Endothelial cell of umbilical vein (primary cell): ENCODE measurements at regions of chr15 and their contacts with region 1.

Region 1: GRCh38 chr15:48358229-48358641 is 27.0 kb downstream of the DUT start:
- DNase-seq: peak; percentile 82
- H3K4me3 ChIP-seq: peak overlapping the region in 1 of 3 experiments; percentile 4
- H3K27ac ChIP-seq: peak overlapping the region; percentile 28
- H3K4me1 ChIP-seq: peaks cover 22% of the 10 kb centered on the region
- H3K27me3 ChIP-seq: no peaks in the 10 kb centered on the region
- CTCF ChIP-seq: peak; percentile 35 to 37
- POLR2A ChIP-seq: no peak

Region 2: GRCh38 chr15:48076454-48076853 is 281.8 kb before region 1 on chr15:
- CTCF ChIA-PET with region 1: no interaction called
- POLR2A ChIA-PET with region 1: no interaction called
- dilution Hi-C with region 1: no loop called
- intact Hi-C with region 1: no loop called
- DNase-seq: no peak
- H3K4me3 ChIP-seq: no peak overlapping the region
- H3K27ac ChIP-seq: no peak overlapping the region
- H3K4me1 ChIP-seq: no peaks in the 10 kb centered on the region
- H3K27me3 ChIP-seq: peaks cover 6 to 10% of the 10 kb centered on the region in 2 experiments
- CTCF ChIP-seq: no peak
- POLR2A ChIP-seq: no peak

Region 3: GRCh38 chr15:48345516-48345915 is 12.7 kb before region 1 on chr15:
- CTCF ChIA-PET with region 1: no interaction called
- POLR2A ChIA-PET with region 1: no interaction called
- dilution Hi-C with region 1: no loop called
- intact Hi-C with region 1: no loop called
- DNase-seq: no peak
- H3K4me3 ChIP-seq: no peak overlapping the region
- H3K27ac ChIP-seq: no peak overlapping the region
- H3K4me1 ChIP-seq: no peaks in the 10 kb centered on the region
- H3K27me3 ChIP-seq: no peaks in the 10 kb centered on the region
- CTCF ChIP-seq: no peak
- POLR2A ChIP-seq: no peak

Region 4: DNA sequence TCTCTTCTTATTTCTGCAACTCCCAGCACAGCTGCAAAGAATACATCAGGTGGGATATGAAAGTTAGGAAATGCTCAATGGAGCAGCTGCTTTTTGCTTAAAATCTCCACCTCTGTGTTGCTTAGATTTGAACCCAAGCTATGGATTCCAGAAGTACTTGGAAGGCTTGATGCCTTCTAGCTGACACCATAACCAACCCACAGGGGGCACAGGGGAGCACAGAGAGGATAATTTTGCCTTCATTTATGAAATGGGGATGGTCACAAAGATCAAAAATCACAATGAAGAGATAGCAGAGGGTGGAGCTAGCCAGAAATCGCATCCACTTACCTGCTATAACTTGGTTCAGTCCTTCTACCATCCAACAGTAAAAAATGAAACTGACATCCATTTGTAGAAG is 48.7 kb after region 1 on chr15:
- CTCF ChIA-PET with region 1: interaction called, 16 read pairs
- POLR2A ChIA-PET with region 1: no interaction called
- dilution Hi-C with region 1: no loop called
- intact Hi-C with region 1: no loop called
- DNase-seq: no peak
- H3K4me3 ChIP-seq: no peak overlapping the region
- H3K27ac ChIP-seq: no peak overlapping the region
- H3K4me1 ChIP-seq: peaks cover 9% of the 10 kb centered on the region
- H3K27me3 ChIP-seq: no peaks in the 10 kb centered on the region
- CTCF ChIP-seq: peak; percentile 25 to 31
- POLR2A ChIP-seq: no peak

Region 5: GRCh38 chr15:48477795-48478360 is 119.6 kb after region 1 on chr15:
- CTCF ChIA-PET with region 1: interaction called, 11 read pairs
- POLR2A ChIA-PET with region 1: no interaction called
- dilution Hi-C with region 1: no loop called
- intact Hi-C with region 1: no loop called
- DNase-seq: peak; percentile 4
- H3K4me3 ChIP-seq: no peak overlapping the region
- H3K27ac ChIP-seq: no peak overlapping the region
- H3K4me1 ChIP-seq: peaks cover 6% of the 10 kb centered on the region
- H3K27me3 ChIP-seq: no peaks in the 10 kb centered on the region
- CTCF ChIP-seq: no peak
- POLR2A ChIP-seq: no peak

Region 6: DNA sequence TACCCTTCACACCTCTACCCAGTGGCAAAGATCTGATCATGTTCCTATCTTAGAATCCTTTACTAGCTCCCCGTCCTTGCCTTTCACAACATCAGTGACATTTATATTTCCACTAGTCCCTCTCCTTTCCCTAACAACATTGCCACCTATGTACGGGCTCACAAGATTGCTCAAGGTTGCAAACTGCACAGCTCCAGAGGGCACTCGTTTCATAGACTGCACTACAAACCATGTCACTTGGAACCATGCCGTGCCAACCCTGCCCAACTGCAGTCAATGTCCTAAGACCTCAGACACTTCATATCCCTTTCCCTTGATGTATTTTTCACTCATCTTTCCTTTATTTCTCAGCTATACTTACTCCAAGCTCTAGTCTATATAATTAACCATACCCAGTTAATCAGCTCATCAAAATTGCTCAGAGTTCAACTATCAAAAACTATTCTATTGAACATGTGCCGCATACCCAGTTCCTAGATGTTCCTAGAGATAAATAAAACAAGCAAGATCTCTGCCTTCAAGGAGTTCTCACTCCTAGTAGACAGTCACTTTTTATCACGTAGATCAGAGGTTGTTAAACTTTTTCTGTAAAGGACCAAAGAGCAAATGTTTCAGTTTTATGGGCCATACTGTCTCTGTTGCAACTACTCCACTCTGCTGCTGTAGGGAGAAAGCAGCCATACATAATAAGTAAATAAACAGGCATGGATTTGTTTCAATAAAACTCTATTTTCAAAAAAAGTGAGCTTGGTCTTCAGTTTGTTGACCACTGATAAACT is 279.2 kb after region 1 on chr15:
- CTCF ChIA-PET with region 1: interaction called, 13 read pairs
- POLR2A ChIA-PET with region 1: no interaction called
- dilution Hi-C with region 1: no loop called
- intact Hi-C with region 1: no loop called
- DNase-seq: no peak
- H3K4me3 ChIP-seq: no peak overlapping the region
- H3K27ac ChIP-seq: no peak overlapping the region
- H3K4me1 ChIP-seq: peaks cover 15% of the 10 kb centered on the region
- H3K27me3 ChIP-seq: no peaks in the 10 kb centered on the region
- CTCF ChIP-seq: no peak
- POLR2A ChIP-seq: no peak

Region 7: DNA sequence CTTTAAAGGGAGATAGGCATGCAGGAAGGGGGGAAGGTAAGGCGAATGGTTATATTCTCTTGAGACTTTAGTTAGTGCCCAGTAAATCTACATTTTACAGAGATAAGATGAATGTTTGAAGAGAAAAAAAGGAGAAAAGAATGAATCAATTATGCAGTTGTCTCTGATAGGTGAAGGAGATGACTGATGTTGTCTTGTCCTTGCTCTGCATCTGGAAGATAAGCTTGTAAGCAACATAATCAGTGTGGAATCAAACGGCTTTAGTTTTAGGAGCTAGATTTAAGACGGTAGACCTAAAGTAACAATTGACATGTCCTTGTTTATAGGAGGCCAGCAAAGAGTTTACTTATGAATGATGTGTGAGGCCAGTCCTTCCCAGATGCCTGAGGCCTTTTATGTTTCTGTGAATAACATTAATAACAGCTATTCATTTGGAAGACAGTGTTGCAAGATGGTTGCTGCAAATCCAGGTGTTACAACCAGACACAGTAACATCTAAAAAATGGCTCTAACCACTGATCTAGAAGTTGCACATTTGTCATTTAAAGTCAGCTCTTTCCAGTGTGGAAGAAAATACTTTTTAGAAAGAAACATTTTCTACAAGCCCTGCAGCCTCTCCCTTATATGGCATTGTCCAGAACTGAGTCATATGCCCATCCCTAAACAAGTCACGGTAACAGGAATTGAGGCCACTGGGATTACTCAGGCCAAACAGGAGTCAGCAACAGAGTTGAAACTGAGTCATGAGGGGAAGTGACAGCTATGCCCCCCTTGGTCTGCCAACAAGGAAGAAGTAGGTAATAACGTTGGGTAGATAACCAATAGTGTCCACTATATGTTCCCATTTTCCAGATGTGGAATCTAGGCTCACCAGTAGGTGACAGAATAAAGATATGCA is 364.8 kb after region 1 on chr15:
- CTCF ChIA-PET with region 1: interaction called, 3 read pairs
- POLR2A ChIA-PET with region 1: no interaction called
- dilution Hi-C with region 1: no loop called
- intact Hi-C with region 1: loop called (anchors 5 kb)
- DNase-seq: peak; percentile 79
- H3K4me3 ChIP-seq: no peak overlapping the region
- H3K27ac ChIP-seq: peak overlapping the region; percentile 7
- H3K4me1 ChIP-seq: peaks cover 20% of the 10 kb centered on the region
- H3K27me3 ChIP-seq: no peaks in the 10 kb centered on the region
- CTCF ChIP-seq: no peak
- POLR2A ChIP-seq: no peak

Region 8: DNA sequence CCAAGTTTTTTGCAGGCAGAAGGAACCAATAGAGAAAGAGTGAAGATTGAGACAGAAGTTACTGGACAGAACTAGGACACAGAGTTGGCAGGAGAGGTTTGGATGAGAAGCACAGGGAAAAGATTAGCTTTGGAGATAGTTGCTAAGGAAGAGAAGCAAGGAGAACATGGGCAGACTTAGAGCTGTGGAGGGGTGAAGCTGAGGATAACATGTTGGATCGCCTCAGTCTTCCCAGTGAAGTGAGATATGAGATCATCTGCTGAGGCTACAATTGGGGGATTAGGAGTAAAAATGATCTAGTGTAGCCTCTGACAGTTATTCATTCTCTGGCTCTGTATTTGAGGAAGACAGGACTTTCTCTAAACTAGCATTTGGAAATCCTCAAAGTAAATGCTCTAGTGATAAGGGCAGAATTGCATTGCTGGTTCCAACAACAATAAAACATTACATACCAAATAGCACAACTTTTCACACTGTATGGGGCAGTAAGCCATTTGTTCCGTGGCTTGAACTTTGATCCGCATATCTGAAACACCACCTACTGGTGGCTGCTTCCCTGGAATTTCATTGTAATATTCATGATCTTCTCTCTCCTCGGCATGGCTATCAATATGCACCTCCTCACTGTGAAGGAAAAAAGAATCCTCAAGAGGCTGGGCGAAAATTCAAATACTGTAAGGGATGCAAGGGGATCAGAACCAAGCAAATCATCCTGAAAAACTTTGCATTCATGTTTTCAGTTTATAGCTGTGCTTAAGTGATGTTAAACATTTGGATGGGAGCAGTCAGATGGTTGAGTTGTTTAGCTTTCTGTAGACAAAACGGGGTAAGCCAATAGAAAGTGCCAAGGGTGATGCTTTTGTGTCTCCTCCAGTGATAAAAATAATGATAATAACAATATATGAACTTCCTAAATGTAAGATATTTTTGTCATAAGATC is 497.5 kb after region 1 on chr15:
- CTCF ChIA-PET with region 1: interaction called, 69 read pairs
- POLR2A ChIA-PET with region 1: interaction called, 3 read pairs
- dilution Hi-C with region 1: no loop called
- intact Hi-C with region 1: loop called (anchors 1 kb)
- DNase-seq: peak; percentile 61
- H3K4me3 ChIP-seq: no peak overlapping the region
- H3K27ac ChIP-seq: no peak overlapping the region
- H3K4me1 ChIP-seq: no peaks in the 10 kb centered on the region
- H3K27me3 ChIP-seq: no peaks in the 10 kb centered on the region
- CTCF ChIP-seq: peak; percentile 43 to 59
- POLR2A ChIP-seq: no peak

Region 9: DNA sequence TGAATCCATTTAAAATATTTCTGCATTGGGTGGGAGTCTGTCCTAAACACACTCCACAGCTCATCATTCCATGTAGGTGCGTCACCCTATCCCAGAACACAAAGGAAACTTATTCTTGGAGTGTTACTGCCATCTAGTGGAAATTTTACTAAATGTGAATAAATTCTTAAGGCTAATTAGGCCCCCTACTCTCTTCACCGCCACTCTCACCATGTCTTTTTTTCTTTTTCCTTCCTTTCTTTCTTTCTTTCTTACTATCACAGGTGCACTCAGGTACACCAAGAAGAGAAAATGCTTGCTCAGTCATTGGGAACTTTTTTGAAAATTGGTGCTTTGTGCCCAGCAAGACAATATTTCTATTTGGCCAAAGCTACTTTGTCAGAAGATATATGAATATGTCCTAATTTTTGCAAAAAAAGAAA is 1787.2 kb after region 1 on chr15:
- CTCF ChIA-PET with region 1: interaction called, 17 read pairs
- POLR2A ChIA-PET with region 1: no interaction called
- dilution Hi-C with region 1: no loop called
- intact Hi-C with region 1: no loop called
- DNase-seq: peak; percentile 73
- H3K4me3 ChIP-seq: no peak overlapping the region
- H3K27ac ChIP-seq: no peak overlapping the region
- H3K4me1 ChIP-seq: peaks cover 2% of the 10 kb centered on the region
- H3K27me3 ChIP-seq: no peaks in the 10 kb centered on the region
- CTCF ChIP-seq: peak; percentile 16 to 25
- POLR2A ChIP-seq: no peak